IMR-90 (cell line): ENCODE measurements at regions of chr15 and their contacts with region 1.

Region 1: DNA sequence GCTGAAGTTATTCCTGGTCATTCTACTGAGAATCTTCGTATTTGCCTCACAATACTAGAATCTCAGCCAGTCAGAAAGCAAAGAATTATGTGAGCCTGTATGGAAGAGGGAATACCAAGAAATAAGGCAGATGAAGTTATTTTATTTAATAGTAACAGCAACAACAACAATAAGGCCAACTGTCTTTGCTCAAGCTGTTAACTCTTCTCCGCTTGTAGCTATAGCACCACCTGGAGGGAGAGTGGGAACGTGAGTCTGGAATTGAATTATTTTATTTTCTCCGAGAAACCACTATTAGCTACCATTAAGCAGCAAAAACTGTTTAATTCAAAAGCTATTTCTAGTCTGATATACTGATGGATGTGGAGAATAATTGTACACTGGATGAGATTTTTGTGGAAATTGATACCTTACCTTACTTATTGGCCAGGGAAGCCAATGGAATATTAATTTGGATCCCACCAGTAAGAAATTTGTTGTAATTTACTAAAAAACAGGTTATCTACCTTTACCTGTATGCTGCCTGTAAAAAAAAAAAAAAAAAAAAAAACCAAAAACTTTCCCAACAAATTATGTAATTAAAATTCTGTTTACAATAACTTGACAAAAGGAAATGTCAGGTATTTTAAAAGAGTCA is 50.1 kb downstream of the CALML4 start:
- DNase-seq: peak; percentile 70
- ATAC-seq: peak; percentile 54
- H3K4me3 ChIP-seq: no peak overlapping the region
- H3K27ac ChIP-seq: no peak overlapping the region
- H3K4me1 ChIP-seq: no peaks in the 10 kb centered on the region
- H3K27me3 ChIP-seq: no peaks in the 10 kb centered on the region
- CTCF ChIP-seq: peak; percentile 80
- POLR2A ChIP-seq: no peak
- RAD21 ChIP-seq: peak; percentile 91

Region 2: DNA sequence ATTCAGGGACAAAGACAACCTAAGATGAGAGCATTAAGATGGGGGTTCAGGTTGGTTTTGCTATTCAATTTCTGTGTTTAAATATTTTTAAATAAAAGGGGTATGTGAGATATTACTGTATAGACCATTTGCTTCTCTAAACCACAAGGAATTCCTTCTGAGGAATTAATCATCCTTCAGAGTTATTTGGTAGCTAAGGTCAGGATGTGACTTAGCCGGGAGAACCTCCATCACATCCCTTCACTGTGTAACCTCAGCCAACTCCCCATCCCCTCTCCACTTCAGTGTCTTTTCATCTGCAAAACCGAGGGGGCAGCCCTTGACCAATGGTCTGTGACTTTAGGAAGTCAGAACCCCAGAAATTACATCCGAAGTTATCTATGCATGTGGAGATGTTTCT is 378.4 kb before region 1 on chr15:
- CTCF ChIA-PET with region 1: no interaction called
- POLR2A ChIA-PET with region 1: no interaction called
- dilution Hi-C with region 1: no loop called
- in situ Hi-C with region 1: no loop called
- intact Hi-C with region 1: no loop called
- DNase-seq: peak; percentile 9
- ATAC-seq: peak; percentile 44; the same call in 1 of the 2 replicates
- H3K4me3 ChIP-seq: no peak overlapping the region
- H3K27ac ChIP-seq: no peak overlapping the region
- H3K4me1 ChIP-seq: peaks cover 2% of the 10 kb centered on the region; the same call in 1 of the 2 replicates
- H3K27me3 ChIP-seq: no peaks in the 10 kb centered on the region
- CTCF ChIP-seq: no peak
- POLR2A ChIP-seq: no peak
- RAD21 ChIP-seq: no peak

Region 3: GRCh38 chr15:67906382-67906781 is 248.7 kb before region 1 on chr15:
- CTCF ChIA-PET with region 1: no interaction called
- POLR2A ChIA-PET with region 1: no interaction called
- dilution Hi-C with region 1: no loop called
- in situ Hi-C with region 1: no loop called
- intact Hi-C with region 1: loop called (anchors 2 kb)
- DNase-seq: peak; percentile 15
- ATAC-seq: peak; percentile 60
- H3K4me3 ChIP-seq: no peak overlapping the region
- H3K27ac ChIP-seq: no peak overlapping the region
- H3K4me1 ChIP-seq: no peaks in the 10 kb centered on the region
- H3K27me3 ChIP-seq: peaks cover 8% of the 10 kb centered on the region
- CTCF ChIP-seq: peak; percentile 37
- POLR2A ChIP-seq: no peak
- RAD21 ChIP-seq: peak; percentile 46

Region 4: DNA sequence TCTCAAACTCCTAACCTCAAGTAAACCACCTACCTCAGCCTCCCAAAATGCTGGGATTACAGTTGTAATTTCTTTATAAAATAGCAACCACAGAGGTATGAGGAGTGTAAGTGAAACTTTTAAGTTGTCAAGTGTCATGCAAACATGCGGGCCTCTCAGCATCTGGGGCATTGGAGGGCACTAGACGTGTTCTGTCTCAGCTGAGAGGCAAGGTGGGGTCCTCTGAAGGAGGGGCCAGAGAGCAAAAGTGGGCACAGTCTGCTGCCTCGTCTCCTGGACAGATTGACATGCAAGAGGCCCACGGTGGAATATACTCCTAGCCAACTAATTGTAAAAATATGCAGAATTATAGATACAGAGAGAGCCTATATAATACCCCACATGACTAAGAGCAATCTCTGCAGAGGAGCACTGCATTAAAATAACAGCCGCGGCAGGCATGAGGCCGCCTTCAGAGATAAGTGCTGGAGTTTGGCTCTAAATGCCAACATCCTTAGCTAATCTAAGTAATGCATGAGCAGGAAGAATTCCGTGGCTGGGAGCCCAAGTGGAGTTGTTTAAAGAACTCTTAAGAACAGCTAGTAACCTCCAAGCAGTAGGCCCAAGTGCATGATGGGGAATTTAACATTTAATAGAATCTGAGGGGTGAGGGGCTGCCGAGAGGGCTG is 227.4 kb before region 1 on chr15:
- CTCF ChIA-PET with region 1: no interaction called
- POLR2A ChIA-PET with region 1: no interaction called
- dilution Hi-C with region 1: no loop called
- in situ Hi-C with region 1: no loop called
- intact Hi-C with region 1: no loop called
- DNase-seq: peak; percentile 97
- ATAC-seq: peak; percentile 96
- H3K4me3 ChIP-seq: no peak overlapping the region
- H3K27ac ChIP-seq: peak overlapping the region; percentile 87
- H3K4me1 ChIP-seq: peaks cover 14% of the 10 kb centered on the region
- H3K27me3 ChIP-seq: no peaks in the 10 kb centered on the region
- CTCF ChIP-seq: no peak
- POLR2A ChIP-seq: no peak
- RAD21 ChIP-seq: 0 out of 2 replicates have a peak, but pooled peaks have one; percentile 7

Region 5: GRCh38 chr15:67967871-67968431 is 187.1 kb before region 1 on chr15:
- CTCF ChIA-PET with region 1: interaction called, 3 read pairs
- POLR2A ChIA-PET with region 1: no interaction called
- dilution Hi-C with region 1: no loop called
- in situ Hi-C with region 1: no loop called
- intact Hi-C with region 1: loop called (anchors 5 kb)
- DNase-seq: peak; percentile 47
- ATAC-seq: peak; percentile 100
- H3K4me3 ChIP-seq: peak overlapping the region; percentile 28
- H3K27ac ChIP-seq: no peak overlapping the region
- H3K4me1 ChIP-seq: no peaks in the 10 kb centered on the region; the same call in 1 of the 2 replicates
- H3K27me3 ChIP-seq: peaks cover 10% of the 10 kb centered on the region
- CTCF ChIP-seq: no peak
- POLR2A ChIP-seq: no peak
- RAD21 ChIP-seq: no peak

Region 6: DNA sequence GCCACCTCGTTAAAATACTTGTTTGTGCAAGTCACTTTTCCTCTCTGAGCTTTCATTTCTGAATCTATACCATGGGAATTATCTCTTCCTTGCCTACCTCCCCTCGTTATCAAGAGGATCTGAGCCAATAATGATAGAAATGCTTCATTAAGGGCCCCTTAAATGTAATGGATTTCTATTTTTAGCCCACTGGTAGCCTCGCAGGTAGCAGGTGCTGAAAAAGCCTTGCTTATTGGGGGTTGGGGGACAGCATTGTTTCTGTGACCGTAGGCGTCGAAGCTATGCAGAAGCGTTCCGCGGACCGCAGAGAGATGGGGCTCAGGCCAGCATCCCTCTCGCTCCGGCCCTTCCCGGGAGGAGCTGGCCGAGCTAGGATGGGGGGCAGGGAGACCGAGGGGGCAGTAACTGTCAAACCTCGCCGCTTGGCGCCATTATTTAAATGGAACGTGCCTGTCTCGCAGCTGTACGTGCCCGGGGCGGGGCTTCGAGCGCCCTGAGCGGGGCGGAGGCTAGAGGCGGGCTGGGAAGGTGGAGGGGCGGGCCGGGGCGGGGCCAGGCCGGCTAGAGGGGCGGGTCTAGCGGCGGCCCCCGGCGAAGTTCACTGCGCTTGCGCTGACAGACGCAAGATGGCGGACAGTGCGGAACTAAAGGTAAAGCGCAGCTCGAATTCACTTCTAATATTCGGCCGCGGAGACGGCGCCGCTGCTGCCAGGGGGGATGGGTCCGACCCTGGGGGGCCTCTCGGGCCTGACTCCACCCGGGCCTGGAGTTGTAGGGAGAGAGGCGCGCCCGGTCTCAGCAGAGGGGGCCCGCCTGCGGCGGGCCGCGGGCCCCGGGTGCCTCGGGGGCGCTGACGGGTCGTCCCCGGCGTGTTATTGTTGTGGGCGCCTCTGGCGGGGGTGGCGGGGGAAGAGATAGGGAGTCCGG is 101.1 kb before region 1 on chr15 and contains the start of gene PIAS1:
- CTCF ChIA-PET with region 1: interaction called, 3 read pairs
- POLR2A ChIA-PET with region 1: no interaction called
- dilution Hi-C with region 1: no loop called
- in situ Hi-C with region 1: no loop called
- intact Hi-C with region 1: loop called (anchors 2 kb)
- DNase-seq: peak; percentile 83
- ATAC-seq: peak; percentile 98
- H3K4me3 ChIP-seq: peak within 1 kb of the TSS; percentile 88
- H3K27ac ChIP-seq: peak within 1 kb of the TSS; percentile 57
- H3K4me1 ChIP-seq: no peaks in the 10 kb centered on the region; the same call in 1 of the 2 replicates
- H3K27me3 ChIP-seq: no peaks in the 10 kb centered on the region; the same call in 1 of the 2 replicates
- CTCF ChIP-seq: no peak
- POLR2A ChIP-seq: peak; percentile 74
- RAD21 ChIP-seq: no peak
- total RNA-seq, gene PIAS1: 41.1 and 63.6 TPM in 2 replicates